WTC11 (cell line): ENCODE measurements at regions of chr7 and their contacts with region 1.

Region 1: GRCh38 chr7:133021196-133021595 is 60.7 kb downstream of the CHCHD3 start:
- DNase-seq: no peak
- ATAC-seq: peak; percentile 65
- H3K4me3 Mint-ChIP-seq: no peak overlapping the region
- H3K27ac Mint-ChIP-seq: peak overlapping the region; percentile 75
- H3K4me1 Mint-ChIP-seq: peaks cover 45% of the 10 kb centered on the region
- H3K27me3 Mint-ChIP-seq: no peaks in the 10 kb centered on the region
- CTCF ChIP-seq: no peak

Region 2: GRCh38 chr7:132895231-132895630 is 126.0 kb before region 1 on chr7:
- CTCF ChIA-PET with region 1: no interaction called
- POLR2A ChIA-PET with region 1: no interaction called
- DNase-seq: no peak
- ATAC-seq: no peak
- H3K4me3 Mint-ChIP-seq: no peak overlapping the region
- H3K27ac Mint-ChIP-seq: no peak overlapping the region
- H3K4me1 Mint-ChIP-seq: no peaks in the 10 kb centered on the region
- H3K27me3 Mint-ChIP-seq: no peaks in the 10 kb centered on the region
- CTCF ChIP-seq: no peak

Region 3: GRCh38 chr7:133009426-133010252 is 11.6 kb before region 1 on chr7:
- CTCF ChIA-PET with region 1: no interaction called
- POLR2A ChIA-PET with region 1: interaction called, 12 read pairs
- DNase-seq: no peak
- ATAC-seq: no peak
- H3K4me3 Mint-ChIP-seq: no peak overlapping the region
- H3K27ac Mint-ChIP-seq: peak overlapping the region; percentile 34
- H3K4me1 Mint-ChIP-seq: peaks cover 19% of the 10 kb centered on the region
- H3K27me3 Mint-ChIP-seq: no peaks in the 10 kb centered on the region
- CTCF ChIP-seq: no peak